ENCODE measurements at regions of chr7 and their contacts with region 1.

Region 1: DNA sequence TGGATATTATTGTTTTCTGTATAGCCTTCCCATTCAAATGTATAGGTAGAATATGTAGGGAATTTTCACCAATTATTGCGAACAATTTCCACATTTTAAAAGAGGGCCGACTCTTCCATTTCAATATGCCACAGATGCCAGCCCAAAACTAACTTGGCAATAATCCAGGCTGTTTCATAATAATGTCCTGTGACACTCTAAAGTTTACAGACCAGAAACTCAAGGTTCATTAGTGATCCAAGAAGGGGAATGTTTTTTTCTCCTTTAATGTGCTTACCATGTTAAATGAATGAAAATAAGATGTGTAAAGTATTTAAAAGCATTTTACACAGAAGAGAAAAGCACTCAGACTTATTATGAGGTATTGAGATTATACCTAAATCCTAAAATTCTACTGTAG is 63.0 kb upstream of the FAM3C start:
- DNase-seq: no peak
- H3K4me3 ChIP-seq: no peak overlapping the region
- CTCF ChIP-seq: no peak

Region 2: DNA sequence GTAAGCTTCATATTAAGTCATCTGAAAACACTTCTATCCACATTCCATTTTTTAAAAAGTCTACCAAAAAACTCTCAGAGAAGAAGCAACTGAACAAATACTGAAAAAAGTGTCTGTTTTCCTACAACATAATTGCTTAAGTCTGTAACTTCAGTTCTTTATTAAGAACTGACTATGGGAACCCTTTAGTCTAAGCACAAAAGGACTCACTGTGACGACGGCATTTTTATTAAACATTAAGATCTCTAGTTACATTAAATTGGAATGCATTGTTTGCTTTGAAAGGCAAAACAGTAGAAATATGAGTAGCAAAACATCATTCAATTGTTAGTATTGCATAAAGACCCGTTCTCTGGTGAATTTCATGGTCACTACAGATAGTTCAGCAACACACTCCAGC is 57.3 kb before region 1 on chr7:
- in situ Hi-C with region 1: loop called (anchors 5 kb)
- DNase-seq: no peak
- H3K4me3 ChIP-seq: no peak overlapping the region
- CTCF ChIP-seq: no peak

Region 3: GRCh38 chr7:121563177-121563576 is 104.0 kb after region 1 on chr7:
- in situ Hi-C with region 1: no loop called
- DNase-seq: no peak
- H3K4me3 ChIP-seq: no peak overlapping the region
- CTCF ChIP-seq: peak; percentile 32